ENCODE measurements at regions of chr14 and their contacts with region 1.

Region 1: DNA sequence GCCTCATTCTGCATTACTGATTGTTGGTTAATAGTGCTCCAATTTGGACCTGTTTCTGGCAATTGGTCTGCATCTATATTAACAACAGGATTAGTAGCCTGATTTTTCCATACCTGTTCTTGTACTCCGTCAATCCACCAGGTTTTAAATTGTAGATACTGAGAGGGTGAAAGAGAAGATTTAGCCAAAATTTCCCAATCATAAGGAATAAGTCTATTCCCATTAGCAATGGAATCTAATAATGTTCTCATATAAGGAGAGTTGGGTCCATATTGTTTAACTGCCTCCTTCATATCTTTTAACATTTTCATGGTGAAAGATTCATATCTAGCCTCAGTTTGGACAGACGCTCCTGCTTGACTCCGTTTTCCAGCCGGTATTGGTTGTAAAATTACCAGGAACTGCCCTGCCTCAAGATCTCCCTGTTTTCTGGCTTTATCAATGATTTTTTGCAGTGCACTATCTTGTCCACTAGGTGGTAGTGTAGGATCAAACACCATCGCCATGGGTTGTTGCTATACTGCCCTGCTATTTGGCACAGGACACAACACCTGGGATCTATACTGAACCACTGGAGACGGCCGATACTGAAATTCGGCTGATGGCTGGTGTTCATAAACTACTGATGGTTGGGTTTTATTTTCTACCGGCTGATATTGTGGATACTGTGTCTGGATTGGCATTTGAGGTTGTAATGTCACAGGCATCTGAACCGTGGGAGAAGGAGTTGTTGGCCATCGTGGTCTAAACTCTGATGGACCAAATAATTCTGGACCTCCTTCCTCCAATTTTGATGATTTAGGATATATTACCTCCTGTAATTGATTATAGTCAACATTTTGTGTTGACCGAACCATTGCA is 25.2 kb downstream of the DHRS4L2 start:
- DNase-seq: peak; percentile 57
- ATAC-seq: peak; percentile 96
- H3K4me3 ChIP-seq: no peak overlapping the region
- H3K27ac ChIP-seq: no peak overlapping the region
- H3K4me1 ChIP-seq: no peaks in the 10 kb centered on the region
- H3K27me3 ChIP-seq: no peaks in the 10 kb centered on the region
- CTCF ChIP-seq: peak; percentile 77 to 91 (median 81)
- EP300 ChIP-seq: no peak
- POLR2A ChIP-seq: no peak
- RAD21 ChIP-seq: peak; percentile 97

Region 2: GRCh38 chr14:23727566-23728335 is 286.1 kb before region 1 on chr14:
- CTCF ChIA-PET with region 1: no interaction called
- POLR2A ChIA-PET with region 1: no interaction called
- RAD21 ChIA-PET with region 1: no interaction called
- SMC1A ChIA-PET with region 1: no interaction called
- in situ Hi-C with region 1: no loop called
- intact Hi-C with region 1: no loop called
- DNase-seq: no peak
- ATAC-seq: peak; percentile 88
- H3K4me3 ChIP-seq: no peak overlapping the region
- H3K27ac ChIP-seq: no peak overlapping the region
- H3K4me1 ChIP-seq: no peaks in the 10 kb centered on the region
- H3K27me3 ChIP-seq: no peaks in the 10 kb centered on the region
- CTCF ChIP-seq: peak; percentile 22 to 24 (median 22); a peak in 3 of 6 replicates
- EP300 ChIP-seq: no peak
- POLR2A ChIP-seq: no peak
- RAD21 ChIP-seq: peak; percentile 65

Region 3: GRCh38 chr14:23814527-23815256 is 199.2 kb before region 1 on chr14:
- CTCF ChIA-PET with region 1: no interaction called
- POLR2A ChIA-PET with region 1: no interaction called
- RAD21 ChIA-PET with region 1: no interaction called
- SMC1A ChIA-PET with region 1: no interaction called
- in situ Hi-C with region 1: no loop called
- intact Hi-C with region 1: no loop called
- DNase-seq: no peak
- ATAC-seq: no peak
- H3K4me3 ChIP-seq: no peak overlapping the region
- H3K27ac ChIP-seq: no peak overlapping the region
- H3K4me1 ChIP-seq: no peaks in the 10 kb centered on the region
- H3K27me3 ChIP-seq: no peaks in the 10 kb centered on the region
- CTCF ChIP-seq: no peak
- EP300 ChIP-seq: no peak
- POLR2A ChIP-seq: no peak
- RAD21 ChIP-seq: no peak

Region 4: GRCh38 chr14:23953464-23954278 is 60.2 kb before region 1 on chr14 and contains the start of gene DHRS4:
- CTCF ChIA-PET with region 1: no interaction called
- POLR2A ChIA-PET with region 1: no interaction called
- RAD21 ChIA-PET with region 1: no interaction called
- SMC1A ChIA-PET with region 1: no interaction called
- in situ Hi-C with region 1: no loop called
- intact Hi-C with region 1: no loop called
- DNase-seq: peak; percentile 47
- ATAC-seq: peak; percentile 99
- H3K4me3 ChIP-seq: peak within 1 kb of the TSS; percentile 73
- H3K27ac ChIP-seq: peak within 1 kb of the TSS; percentile 78
- H3K4me1 ChIP-seq: no peaks in the 10 kb centered on the region
- H3K27me3 ChIP-seq: no peaks in the 10 kb centered on the region
- CTCF ChIP-seq: peak; percentile 80 to 92 (median 92)
- EP300 ChIP-seq: no peak
- POLR2A ChIP-seq: peak; percentile 71
- RAD21 ChIP-seq: peak; percentile 78
- polyA plus RNA-seq, gene DHRS4: 2.4 to 8.2 TPM

Region 5: DNA sequence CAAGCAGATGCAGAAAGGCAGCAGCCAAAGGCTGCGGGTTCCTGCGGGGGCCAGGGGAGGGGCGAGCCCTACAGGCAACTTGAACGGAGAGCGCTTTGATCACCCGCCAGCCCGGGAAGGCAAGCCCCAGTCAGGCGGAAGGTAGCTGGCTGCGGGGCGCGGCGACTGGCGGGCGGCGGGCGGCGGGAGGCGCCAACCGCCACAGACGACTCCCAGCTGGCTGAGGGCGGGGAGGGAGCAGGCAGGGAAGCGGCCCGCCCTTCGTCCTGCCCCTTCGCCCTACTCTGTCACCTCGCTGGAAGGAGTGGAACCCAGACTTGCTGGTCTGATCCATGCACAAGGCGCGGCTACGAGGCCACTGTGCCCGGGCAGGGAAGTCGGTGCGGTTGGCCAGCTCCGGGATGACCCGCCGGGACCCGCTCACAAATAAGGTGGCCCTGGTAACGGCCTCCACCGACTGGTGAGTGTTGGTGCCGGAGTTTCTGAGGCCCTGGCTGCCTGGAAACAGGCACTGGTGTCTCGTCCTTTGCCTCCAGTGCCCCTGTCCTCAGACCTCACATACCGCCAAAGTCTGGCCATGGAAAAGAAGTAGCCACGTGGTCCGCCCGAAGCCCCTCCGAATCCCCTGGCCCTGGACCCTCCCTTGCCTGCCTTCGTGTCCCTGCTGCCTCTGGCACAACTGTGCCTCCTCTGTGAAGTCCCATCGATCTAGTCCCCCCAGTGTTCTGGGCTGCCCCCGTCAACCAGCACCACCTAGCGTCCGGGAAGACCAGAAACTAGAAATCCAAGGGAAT is 22.5 kb after region 1 on chr14:
- CTCF ChIA-PET with region 1: interaction called, 3 read pairs
- POLR2A ChIA-PET with region 1: no interaction called
- RAD21 ChIA-PET with region 1: no interaction called
- SMC1A ChIA-PET with region 1: interaction called, 4 read pairs
- in situ Hi-C with region 1: no loop called
- intact Hi-C with region 1: loop called (anchors 1 kb)
- DNase-seq: no peak
- ATAC-seq: peak; percentile 91
- H3K4me3 ChIP-seq: peak overlapping the region; percentile 73
- H3K27ac ChIP-seq: peak overlapping the region; percentile 56
- H3K4me1 ChIP-seq: no peaks in the 10 kb centered on the region; the same call in 1 of the 2 replicates
- H3K27me3 ChIP-seq: no peaks in the 10 kb centered on the region
- CTCF ChIP-seq: peak; percentile 79 to 84 (median 82)
- EP300 ChIP-seq: no peak
- POLR2A ChIP-seq: peak; percentile 73
- RAD21 ChIP-seq: peak; percentile 69

Region 6: DNA sequence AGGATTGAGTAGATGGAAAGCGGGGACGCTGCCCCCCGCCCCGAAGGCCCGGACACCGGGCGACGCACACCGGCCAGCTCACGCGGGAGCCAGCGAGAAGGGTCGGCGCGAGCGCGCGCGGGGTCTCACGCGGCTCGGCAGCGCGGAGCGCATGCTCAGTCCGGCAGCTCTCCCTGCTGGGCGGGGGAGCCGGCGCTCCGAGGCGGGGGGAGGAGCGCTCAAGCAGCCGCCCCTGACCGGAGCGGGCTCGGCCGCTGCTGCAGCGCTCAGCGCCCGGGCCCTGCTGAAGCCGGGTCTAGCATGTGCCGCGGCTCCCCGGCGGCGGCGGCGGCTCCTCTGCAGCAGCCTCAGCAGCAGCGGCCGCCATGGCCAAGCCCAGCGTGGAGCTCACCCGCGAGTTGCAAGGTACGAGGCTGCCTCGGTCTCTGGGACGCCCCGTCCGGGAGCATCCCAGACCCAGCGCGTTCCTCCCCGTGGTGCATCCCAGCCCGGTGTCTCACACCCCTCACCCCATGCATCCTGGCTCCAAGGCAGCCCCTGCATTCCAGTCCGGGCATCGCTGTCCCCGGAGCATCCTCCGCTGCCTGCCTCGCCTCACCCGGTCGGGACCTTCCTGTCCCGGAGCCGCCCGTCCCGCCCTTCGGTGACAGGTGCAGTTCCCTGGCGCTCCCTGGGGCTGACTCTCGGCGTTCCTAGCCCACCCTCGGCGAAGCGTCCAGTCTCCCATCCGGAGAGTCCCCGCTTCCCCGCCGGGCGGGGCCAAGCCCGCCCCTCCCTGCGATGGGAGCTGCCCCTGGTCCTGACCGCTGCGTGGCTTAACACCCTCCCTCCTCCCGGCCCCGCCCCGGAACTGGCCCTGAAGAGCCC is 38.1 kb after region 1 on chr14 and contains the start of gene CARMIL3:
- CTCF ChIA-PET with region 1: no interaction called
- POLR2A ChIA-PET with region 1: no interaction called
- RAD21 ChIA-PET with region 1: no interaction called
- SMC1A ChIA-PET with region 1: interaction called, 4 read pairs
- in situ Hi-C with region 1: no loop called
- intact Hi-C with region 1: loop called (anchors 2 kb)
- DNase-seq: no peak
- ATAC-seq: peak; percentile 93
- H3K4me3 ChIP-seq: peak within 1 kb of the TSS; percentile 74
- H3K27ac ChIP-seq: peak within 1 kb of the TSS; percentile 31; the same call in 1 of the 2 replicates
- H3K4me1 ChIP-seq: peaks cover 23% of the 10 kb centered on the region
- H3K27me3 ChIP-seq: peaks cover 0 to 3% of the 10 kb centered on the region in 2 experiments; a peak in 1 of 4 replicates
- CTCF ChIP-seq: no peak
- EP300 ChIP-seq: no peak
- POLR2A ChIP-seq: peak; percentile 50; the same call in 1 of the 2 replicates
- RAD21 ChIP-seq: no peak
- polyA plus RNA-seq, gene CARMIL3: not detected

Region 7: GRCh38 chr14:24086193-24086955 is 72.5 kb after region 1 on chr14:
- CTCF ChIA-PET with region 1: interaction called, 9 read pairs
- POLR2A ChIA-PET with region 1: no interaction called
- RAD21 ChIA-PET with region 1: interaction called, 3 read pairs
- SMC1A ChIA-PET with region 1: interaction called, 5 read pairs
- in situ Hi-C with region 1: loop called (anchors 5 kb)
- intact Hi-C with region 1: loop called (anchors 1 kb)
- DNase-seq: no peak
- ATAC-seq: no peak
- H3K4me3 ChIP-seq: no peak overlapping the region
- H3K27ac ChIP-seq: no peak overlapping the region
- H3K4me1 ChIP-seq: 0 out of 2 replicates have a peak, but pooled peaks cover 3% of the 10 kb centered on the region
- H3K27me3 ChIP-seq: no peaks in the 10 kb centered on the region
- CTCF ChIP-seq: no peak
- EP300 ChIP-seq: no peak
- POLR2A ChIP-seq: no peak
- RAD21 ChIP-seq: no peak

Measured in GM12878 (cell line).